B cell (primary cell): ENCODE measurements at regions of chr9 and their contacts with region 1.

Region 1: GRCh38 chr9:68507130-68507805 is 33.4 kb downstream of the TMEM252 start:
- DNase-seq: peak; percentile 32
- ATAC-seq: no peak
- H3K4me3 ChIP-seq: no peak overlapping the region
- H3K4me3 Mint-ChIP-seq: no peak overlapping the region
- H3K27ac ChIP-seq: no peak overlapping the region
- H3K27ac Mint-ChIP-seq: no peak overlapping the region
- H3K4me1 ChIP-seq: peaks cover 5 to 6% of the 10 kb centered on the region in 2 donors
- H3K4me1 Mint-ChIP-seq: peaks cover 18% of the 10 kb centered on the region
- H3K27me3 ChIP-seq: no peaks in the 10 kb centered on the region
- H3K27me3 Mint-ChIP-seq: no peaks in the 10 kb centered on the region
- CTCF ChIP-seq: peak; percentile 70

Region 2: GRCh38 chr9:68455451-68455850 is 51.8 kb before region 1 on chr9:
- CTCF ChIA-PET with region 1: no interaction called
- POLR2A ChIA-PET with region 1: no interaction called
- intact Hi-C with region 1: loop called (anchors 10 kb)
- DNase-seq: no peak
- ATAC-seq: no peak
- H3K4me3 ChIP-seq: no peak overlapping the region
- H3K4me3 Mint-ChIP-seq: no peak overlapping the region
- H3K27ac ChIP-seq: no peak overlapping the region
- H3K27ac Mint-ChIP-seq: no peak overlapping the region
- H3K4me1 ChIP-seq: no peaks in the 10 kb centered on the region
- H3K4me1 Mint-ChIP-seq: peaks cover 5% of the 10 kb centered on the region
- H3K27me3 ChIP-seq: no peaks in the 10 kb centered on the region
- H3K27me3 Mint-ChIP-seq: peaks cover 18% of the 10 kb centered on the region
- CTCF ChIP-seq: no peak

Region 3: GRCh38 chr9:68546596-68547390 is 39.5 kb after region 1 on chr9:
- CTCF ChIA-PET with region 1: no interaction called
- POLR2A ChIA-PET with region 1: no interaction called
- intact Hi-C with region 1: loop called (anchors 5 kb)
- DNase-seq: peak; percentile 67
- ATAC-seq: peak; percentile 82
- H3K4me3 ChIP-seq: peak overlapping the region in 4 of 5 experiments; percentile 10 to 47 (median 16)
- H3K4me3 Mint-ChIP-seq: peak overlapping the region; percentile 76
- H3K27ac ChIP-seq: peak overlapping the region; percentile 56 to 72
- H3K27ac Mint-ChIP-seq: peak overlapping the region; percentile 80
- H3K4me1 ChIP-seq: peaks cover 30% of the 10 kb centered on the region in 2 donors
- H3K4me1 Mint-ChIP-seq: peaks cover 42% of the 10 kb centered on the region
- H3K27me3 ChIP-seq: no peaks in the 10 kb centered on the region
- H3K27me3 Mint-ChIP-seq: no peaks in the 10 kb centered on the region
- CTCF ChIP-seq: no peak

Region 4: DNA sequence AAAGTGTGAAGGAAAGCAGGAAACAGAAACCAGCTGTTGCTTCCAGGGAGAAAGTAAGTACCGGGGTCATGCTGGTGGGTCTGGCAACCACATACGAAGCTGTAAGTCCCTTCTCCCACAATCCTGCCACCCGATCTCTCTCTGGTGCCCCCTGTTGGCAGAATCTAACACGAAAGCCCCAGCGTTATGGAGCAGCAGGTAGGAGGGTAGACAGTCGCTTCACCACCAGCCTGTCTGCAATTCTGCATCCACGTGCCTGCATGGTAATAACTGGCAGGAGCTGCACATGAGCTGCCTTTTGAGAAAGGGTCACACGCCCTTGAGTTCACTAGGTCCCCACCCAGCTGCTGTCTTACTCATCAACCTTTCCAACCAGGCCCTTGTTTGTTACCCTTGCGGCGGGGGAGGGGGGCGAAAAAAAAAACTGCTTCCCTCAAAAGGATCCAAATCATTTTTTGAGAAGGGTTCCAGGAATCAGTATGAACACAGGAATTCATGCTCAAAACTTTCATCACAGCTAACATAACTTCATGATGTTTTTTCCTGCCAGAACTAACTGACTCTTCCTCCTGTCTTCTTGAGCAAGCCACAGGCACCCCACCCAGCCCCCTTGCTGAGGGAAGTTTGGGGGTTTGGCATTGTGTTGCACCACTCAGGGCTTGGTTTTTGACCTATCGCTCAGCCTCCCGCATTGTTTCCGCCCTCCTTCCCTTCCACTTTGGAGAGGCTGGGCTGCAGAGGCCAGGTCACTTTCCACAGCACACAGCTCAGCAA is 53.0 kb after region 1 on chr9:
- CTCF ChIA-PET with region 1: interaction called, 22 read pairs
- POLR2A ChIA-PET with region 1: no interaction called
- intact Hi-C with region 1: loop called (anchors 5 kb)
- DNase-seq: peak; percentile 75
- ATAC-seq: peak; percentile 76
- H3K4me3 ChIP-seq: no peak overlapping the region
- H3K4me3 Mint-ChIP-seq: peak overlapping the region; percentile 74
- H3K27ac ChIP-seq: no peak overlapping the region
- H3K27ac Mint-ChIP-seq: no peak overlapping the region
- H3K4me1 ChIP-seq: peaks cover 13% of the 10 kb centered on the region in 2 donors
- H3K4me1 Mint-ChIP-seq: peaks cover 18% of the 10 kb centered on the region
- H3K27me3 ChIP-seq: peaks cover 0 to 3% (median 0%) of the 10 kb centered on the region in 4 experiments
- H3K27me3 Mint-ChIP-seq: peaks cover 10% of the 10 kb centered on the region
- CTCF ChIP-seq: peak; percentile 71

Region 5: DNA sequence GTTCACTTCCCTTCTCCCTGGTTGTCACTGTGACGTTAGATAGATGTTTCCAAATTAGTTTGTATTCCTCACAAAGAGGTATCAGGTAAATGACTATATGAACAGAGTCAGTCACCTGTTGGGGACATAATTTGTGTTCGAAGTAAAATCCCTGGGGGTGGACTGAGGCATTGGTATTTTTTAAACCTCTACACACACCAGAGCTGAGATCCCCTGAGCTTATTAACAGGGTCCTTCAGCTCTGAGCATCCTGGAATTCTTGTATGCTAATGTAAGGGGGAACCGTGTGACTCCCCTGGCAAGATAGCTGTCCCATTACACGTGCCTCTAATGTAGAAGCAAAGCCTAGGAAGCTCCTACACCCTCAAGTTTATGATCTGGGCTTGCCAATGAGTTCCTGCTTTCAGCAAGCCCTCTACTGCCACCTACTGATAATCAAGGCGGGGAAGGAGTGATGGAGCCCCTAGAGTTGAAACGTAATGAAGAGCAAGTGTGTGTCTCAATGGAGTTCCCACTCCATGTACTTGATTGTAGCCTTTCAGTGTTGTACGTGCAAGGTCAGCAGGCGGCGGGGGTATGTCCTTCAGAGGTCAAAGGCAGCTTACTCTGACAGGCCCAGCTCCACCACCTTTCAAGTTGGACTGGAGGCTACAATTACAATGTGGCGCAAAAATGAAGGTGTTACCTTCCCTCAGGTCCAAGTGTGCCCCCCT is 492.3 kb after region 1 on chr9:
- CTCF ChIA-PET with region 1: interaction called, 3 read pairs
- POLR2A ChIA-PET with region 1: no interaction called
- intact Hi-C with region 1: loop called (anchors 10 kb)
- DNase-seq: peak; percentile 74
- ATAC-seq: peak; percentile 92
- H3K4me3 ChIP-seq: no peak overlapping the region
- H3K4me3 Mint-ChIP-seq: no peak overlapping the region
- H3K27ac ChIP-seq: no peak overlapping the region
- H3K27ac Mint-ChIP-seq: peak overlapping the region; percentile 16
- H3K4me1 ChIP-seq: peaks cover 0 to 7% of the 10 kb centered on the region in 2 donors
- H3K4me1 Mint-ChIP-seq: peaks cover 21% of the 10 kb centered on the region
- H3K27me3 ChIP-seq: no peaks in the 10 kb centered on the region
- H3K27me3 Mint-ChIP-seq: no peaks in the 10 kb centered on the region
- CTCF ChIP-seq: peak; percentile 82